ENCODE measurements at regions of chr7 and their contacts with region 1.

Region 1: GRCh38 chr7:107768272-107768671 is 24.3 kb downstream of the CBLL1 start:
- DNase-seq: no peak
- H3K4me3 ChIP-seq: no peak overlapping the region
- H3K27me3 ChIP-seq: no peaks in the 10 kb centered on the region
- CTCF ChIP-seq: no peak

Region 2: GRCh38 chr7:107754642-107755041 is 13.6 kb before region 1 on chr7:
- CTCF ChIA-PET with region 1: interaction called, 3 read pairs
- POLR2A ChIA-PET with region 1: interaction called, 10 read pairs
- DNase-seq: no peak
- H3K4me3 ChIP-seq: no peak overlapping the region
- H3K27me3 ChIP-seq: no peaks in the 10 kb centered on the region
- CTCF ChIP-seq: no peak

Region 3: GRCh38 chr7:107782374-107782773 is 14.1 kb after region 1 on chr7:
- CTCF ChIA-PET with region 1: no interaction called
- POLR2A ChIA-PET with region 1: no interaction called
- DNase-seq: no peak
- H3K4me3 ChIP-seq: no peak overlapping the region
- H3K27me3 ChIP-seq: no peaks in the 10 kb centered on the region
- CTCF ChIP-seq: no peak

Region 4: GRCh38 chr7:107843184-107843583 is 74.9 kb after region 1 on chr7:
- CTCF ChIA-PET with region 1: no interaction called
- POLR2A ChIA-PET with region 1: no interaction called
- DNase-seq: no peak
- H3K4me3 ChIP-seq: no peak overlapping the region
- H3K27me3 ChIP-seq: 0 out of 2 replicates have a peak, but pooled peaks cover 1% of the 10 kb centered on the region
- CTCF ChIP-seq: no peak

Region 5: GRCh38 chr7:107865956-107866775 is 97.9 kb after region 1 on chr7:
- CTCF ChIA-PET with region 1: interaction called, 4 read pairs
- POLR2A ChIA-PET with region 1: interaction called, 19 read pairs
- DNase-seq: no peak
- H3K4me3 ChIP-seq: no peak overlapping the region
- H3K27me3 ChIP-seq: no peaks in the 10 kb centered on the region
- CTCF ChIP-seq: no peak

Region 6: DNA sequence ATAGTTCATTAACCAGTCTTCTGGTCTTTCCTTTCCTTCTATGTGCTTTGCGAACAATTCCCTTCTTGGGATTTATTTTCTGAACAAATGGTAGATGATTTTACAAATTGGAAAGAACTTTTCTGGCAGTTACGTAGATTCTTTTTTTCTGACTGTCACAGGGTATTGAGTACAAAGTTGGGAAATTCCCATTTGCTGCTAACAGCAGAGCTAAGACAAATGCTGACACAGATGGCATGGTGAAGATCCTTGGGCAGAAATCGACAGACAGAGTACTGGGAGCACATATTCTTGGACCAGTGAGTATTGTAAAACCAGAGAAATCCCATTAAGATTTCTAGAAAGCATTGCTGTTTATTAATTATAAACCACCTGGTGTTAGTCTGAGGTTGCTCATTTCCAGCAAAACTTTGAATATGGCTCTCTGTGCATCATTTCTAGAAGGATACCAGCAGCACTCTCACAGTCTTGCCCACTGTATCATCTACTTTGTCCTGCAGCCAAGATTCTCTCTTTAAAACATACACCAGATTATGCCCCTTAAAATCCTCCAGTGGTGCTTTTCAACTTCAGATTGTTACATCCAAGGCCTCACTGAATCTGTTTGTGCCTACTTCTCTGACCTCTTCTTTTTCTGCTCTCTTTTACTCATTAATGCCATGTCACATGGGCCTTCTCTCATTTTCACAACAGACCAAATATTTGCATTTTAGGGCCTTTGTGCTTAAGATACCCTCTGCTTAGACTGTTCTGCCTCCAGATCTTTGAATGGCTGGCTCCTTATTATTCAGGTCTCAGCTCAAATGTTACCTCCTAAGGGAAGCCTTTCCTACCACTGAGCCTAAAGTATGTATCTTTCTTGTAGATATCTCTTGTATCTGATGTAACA is 149.7 kb after region 1 on chr7:
- CTCF ChIA-PET with region 1: no interaction called
- POLR2A ChIA-PET with region 1: no interaction called
- DNase-seq: no peak
- H3K4me3 ChIP-seq: no peak overlapping the region
- H3K27me3 ChIP-seq: no peaks in the 10 kb centered on the region
- CTCF ChIP-seq: no peak